PC-3 (cell line): ENCODE measurements at regions of chr7 and their contacts with region 1.

Region 1: GRCh38 chr7:20514364-20514763 is 101.1 kb upstream of the ABCB5 start:
- DNase-seq: peak; percentile 55
- ATAC-seq: peak; percentile 87
- H3K4me3 ChIP-seq: no peak overlapping the region
- H3K27ac ChIP-seq: no peak overlapping the region
- H3K4me1 ChIP-seq: peaks cover 8% of the 10 kb centered on the region
- H3K27me3 ChIP-seq: no peaks in the 10 kb centered on the region
- CTCF ChIP-seq: no peak

Region 2: GRCh38 chr7:20316706-20317105 is 197.7 kb before region 1 on chr7:
- CTCF ChIA-PET with region 1: no interaction called
- POLR2A ChIA-PET with region 1: interaction called, 12 read pairs
- intact Hi-C with region 1: no loop called
- DNase-seq: no peak
- ATAC-seq: peak; percentile 72
- H3K4me3 ChIP-seq: no peak overlapping the region
- H3K27ac ChIP-seq: no peak overlapping the region
- H3K4me1 ChIP-seq: no peaks in the 10 kb centered on the region
- H3K27me3 ChIP-seq: no peaks in the 10 kb centered on the region
- CTCF ChIP-seq: no peak

Region 3: GRCh38 chr7:20352573-20353304 is 161.6 kb before region 1 on chr7:
- CTCF ChIA-PET with region 1: no interaction called
- POLR2A ChIA-PET with region 1: no interaction called
- intact Hi-C with region 1: loop called (anchors 5 kb)
- DNase-seq: peak; percentile 97
- ATAC-seq: peak; percentile 94
- H3K4me3 ChIP-seq: peak overlapping the region; percentile 45
- H3K27ac ChIP-seq: peak overlapping the region; percentile 95
- H3K4me1 ChIP-seq: peaks cover 46% of the 10 kb centered on the region
- H3K27me3 ChIP-seq: no peaks in the 10 kb centered on the region
- CTCF ChIP-seq: no peak

Region 4: GRCh38 chr7:20532890-20533289 is 18.5 kb after region 1 on chr7:
- CTCF ChIA-PET with region 1: no interaction called
- POLR2A ChIA-PET with region 1: no interaction called
- intact Hi-C with region 1: loop called (anchors 2 kb)
- DNase-seq: peak; percentile 57
- ATAC-seq: peak; percentile 97
- H3K4me3 ChIP-seq: no peak overlapping the region
- H3K27ac ChIP-seq: no peak overlapping the region
- H3K4me1 ChIP-seq: peaks cover 9% of the 10 kb centered on the region
- H3K27me3 ChIP-seq: no peaks in the 10 kb centered on the region
- CTCF ChIP-seq: no peak

Region 5: GRCh38 chr7:20601121-20601520 is 86.8 kb after region 1 on chr7:
- CTCF ChIA-PET with region 1: no interaction called
- POLR2A ChIA-PET with region 1: no interaction called
- intact Hi-C with region 1: no loop called
- DNase-seq: no peak
- ATAC-seq: no peak
- H3K4me3 ChIP-seq: no peak overlapping the region
- H3K27ac ChIP-seq: no peak overlapping the region
- H3K4me1 ChIP-seq: peaks cover 24% of the 10 kb centered on the region
- H3K27me3 ChIP-seq: no peaks in the 10 kb centered on the region
- CTCF ChIP-seq: no peak